ENCODE measurements at regions of chr10 and their contacts with region 1.

Region 1: GRCh38 chr10:122374237-122374869 is at the start of gene PLEKHA1:
- DNase-seq: peak; percentile 70
- ATAC-seq: peak; percentile 98
- H3K4me3 ChIP-seq: peak within 1 kb of the TSS; percentile 86 to 90
- H3K27ac ChIP-seq: peak within 1 kb of the TSS; percentile 91
- H3K4me1 ChIP-seq: peaks cover 26% of the 10 kb centered on the region
- H3K27me3 ChIP-seq: no peaks in the 10 kb centered on the region
- CTCF ChIP-seq: no peak
- total RNA-seq, gene PLEKHA1: 95.5 TPM

Region 2: GRCh38 chr10:122062831-122063674 is 311.3 kb before region 1 on chr10:
- CTCF ChIA-PET with region 1: no interaction called
- POLR2A ChIA-PET with region 1: interaction called, 10 read pairs
- in situ Hi-C with region 1: no loop called
- intact Hi-C with region 1: no loop called
- DNase-seq: peak; percentile 97
- ATAC-seq: peak; percentile 99
- H3K4me3 ChIP-seq: no peak overlapping the region
- H3K27ac ChIP-seq: peak overlapping the region; percentile 92
- H3K4me1 ChIP-seq: peaks cover 39% of the 10 kb centered on the region
- H3K27me3 ChIP-seq: no peaks in the 10 kb centered on the region
- CTCF ChIP-seq: no peak

Region 3: GRCh38 chr10:122298598-122299301 is 75.6 kb before region 1 on chr10:
- CTCF ChIA-PET with region 1: no interaction called
- POLR2A ChIA-PET with region 1: interaction called, 4 read pairs
- in situ Hi-C with region 1: no loop called
- intact Hi-C with region 1: loop called (anchors 2 kb)
- DNase-seq: peak; percentile 80
- ATAC-seq: peak; percentile 90
- H3K4me3 ChIP-seq: peak overlapping the region; percentile 18 to 24
- H3K27ac ChIP-seq: peak overlapping the region; percentile 76
- H3K4me1 ChIP-seq: peaks cover 17% of the 10 kb centered on the region
- H3K27me3 ChIP-seq: no peaks in the 10 kb centered on the region
- CTCF ChIP-seq: peak; percentile 96

Region 4: GRCh38 chr10:122310311-122311050 is 63.9 kb before region 1 on chr10:
- CTCF ChIA-PET with region 1: interaction called, 4 read pairs
- POLR2A ChIA-PET with region 1: interaction called, 8 read pairs
- in situ Hi-C with region 1: no loop called
- intact Hi-C with region 1: loop called (anchors 2 kb)
- DNase-seq: no peak
- ATAC-seq: peak; percentile 85
- H3K4me3 ChIP-seq: peak overlapping the region in 1 of 2 experiments; percentile 27; a peak in 2 of 4 replicates
- H3K27ac ChIP-seq: peak overlapping the region; percentile 95
- H3K4me1 ChIP-seq: peaks cover 56% of the 10 kb centered on the region
- H3K27me3 ChIP-seq: no peaks in the 10 kb centered on the region
- CTCF ChIP-seq: no peak; the same call in 1 of the 2 replicates

Region 5: DNA sequence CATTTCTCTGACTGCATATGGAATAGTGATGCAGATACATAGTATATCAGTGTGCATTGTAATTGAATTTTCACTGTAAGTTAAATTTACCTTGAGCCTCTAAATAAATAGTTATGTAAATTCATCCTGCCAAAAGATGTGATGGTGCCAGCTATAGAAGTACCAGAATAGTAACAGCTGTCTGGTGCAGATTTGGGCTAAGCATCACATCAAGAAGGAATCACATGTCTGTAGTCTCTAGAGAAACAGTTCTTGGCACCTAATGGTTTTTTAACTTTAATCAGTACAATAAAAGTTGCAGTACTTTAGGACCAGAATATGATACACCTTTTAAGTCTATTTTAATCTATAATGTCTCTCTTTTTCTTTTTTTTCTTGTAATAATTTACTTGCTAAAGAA is 17.5 kb after region 1 on chr10:
- CTCF ChIA-PET with region 1: interaction called, 15 read pairs
- POLR2A ChIA-PET with region 1: interaction called, 11 read pairs
- in situ Hi-C with region 1: no loop called
- intact Hi-C with region 1: no loop called
- DNase-seq: no peak
- ATAC-seq: no peak
- H3K4me3 ChIP-seq: no peak overlapping the region
- H3K27ac ChIP-seq: no peak overlapping the region; the same call in 1 of the 2 replicates
- H3K4me1 ChIP-seq: peaks cover 8% of the 10 kb centered on the region; the same call in 1 of the 2 replicates
- H3K27me3 ChIP-seq: no peaks in the 10 kb centered on the region
- CTCF ChIP-seq: no peak

Region 6: DNA sequence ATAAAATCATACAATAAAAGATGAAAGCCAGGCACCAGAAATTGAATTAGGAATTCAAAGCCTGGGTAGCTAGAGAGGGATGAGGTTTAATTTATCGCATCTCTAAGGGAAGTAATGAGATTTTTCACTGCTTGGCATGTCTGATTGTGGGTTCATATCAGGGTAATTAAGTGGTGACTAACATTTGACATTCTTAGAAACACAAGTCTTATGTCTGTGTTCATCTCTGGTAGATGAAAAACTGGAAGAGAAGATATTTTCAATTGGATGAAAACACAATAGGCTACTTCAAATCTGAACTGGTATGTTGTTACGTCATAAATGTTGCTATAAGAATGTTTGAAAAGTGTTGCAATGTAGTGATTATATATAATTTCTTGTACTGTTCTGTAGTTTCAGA is 43.3 kb after region 1 on chr10:
- CTCF ChIA-PET with region 1: no interaction called
- POLR2A ChIA-PET with region 1: no interaction called
- in situ Hi-C with region 1: no loop called
- intact Hi-C with region 1: no loop called
- DNase-seq: no peak
- ATAC-seq: no peak
- H3K4me3 ChIP-seq: no peak overlapping the region
- H3K27ac ChIP-seq: no peak overlapping the region
- H3K4me1 ChIP-seq: no peaks in the 10 kb centered on the region
- H3K27me3 ChIP-seq: no peaks in the 10 kb centered on the region
- CTCF ChIP-seq: no peak

Region 7: GRCh38 chr10:122894261-122894944 is 520.0 kb after region 1 on chr10:
- CTCF ChIA-PET with region 1: no interaction called
- POLR2A ChIA-PET with region 1: no interaction called
- in situ Hi-C with region 1: no loop called
- intact Hi-C with region 1: no loop called
- DNase-seq: no peak
- ATAC-seq: peak; percentile 62; the same call in 1 of the 2 replicates
- H3K4me3 ChIP-seq: no peak overlapping the region
- H3K27ac ChIP-seq: no peak overlapping the region
- H3K4me1 ChIP-seq: no peaks in the 10 kb centered on the region
- H3K27me3 ChIP-seq: no peaks in the 10 kb centered on the region
- CTCF ChIP-seq: no peak